Caco-2 (cell line): ENCODE measurements at regions of chrX and their contacts with region 1.

Region 1: GRCh38 chrX:103686199-103687072 is at the start of gene MORF4L2:
- DNase-seq: peak; percentile 91 to 96
- H3K4me3 ChIP-seq: peak within 1 kb of the TSS; percentile 63
- H3K4me3 Mint-ChIP-seq: no peak within 1 kb of the TSS
- H3K27ac Mint-ChIP-seq: no peak within 1 kb of the TSS
- H3K4me1 ChIP-seq: no peaks in the 10 kb centered on the region
- H3K4me1 Mint-ChIP-seq: no peaks in the 10 kb centered on the region
- H3K27me3 ChIP-seq: no peaks in the 10 kb centered on the region
- H3K27me3 Mint-ChIP-seq: no peaks in the 10 kb centered on the region
- CTCF ChIP-seq: no peak
- total RNA-seq, gene MORF4L2: 314 and 322 TPM in 2 replicates

Region 2: DNA sequence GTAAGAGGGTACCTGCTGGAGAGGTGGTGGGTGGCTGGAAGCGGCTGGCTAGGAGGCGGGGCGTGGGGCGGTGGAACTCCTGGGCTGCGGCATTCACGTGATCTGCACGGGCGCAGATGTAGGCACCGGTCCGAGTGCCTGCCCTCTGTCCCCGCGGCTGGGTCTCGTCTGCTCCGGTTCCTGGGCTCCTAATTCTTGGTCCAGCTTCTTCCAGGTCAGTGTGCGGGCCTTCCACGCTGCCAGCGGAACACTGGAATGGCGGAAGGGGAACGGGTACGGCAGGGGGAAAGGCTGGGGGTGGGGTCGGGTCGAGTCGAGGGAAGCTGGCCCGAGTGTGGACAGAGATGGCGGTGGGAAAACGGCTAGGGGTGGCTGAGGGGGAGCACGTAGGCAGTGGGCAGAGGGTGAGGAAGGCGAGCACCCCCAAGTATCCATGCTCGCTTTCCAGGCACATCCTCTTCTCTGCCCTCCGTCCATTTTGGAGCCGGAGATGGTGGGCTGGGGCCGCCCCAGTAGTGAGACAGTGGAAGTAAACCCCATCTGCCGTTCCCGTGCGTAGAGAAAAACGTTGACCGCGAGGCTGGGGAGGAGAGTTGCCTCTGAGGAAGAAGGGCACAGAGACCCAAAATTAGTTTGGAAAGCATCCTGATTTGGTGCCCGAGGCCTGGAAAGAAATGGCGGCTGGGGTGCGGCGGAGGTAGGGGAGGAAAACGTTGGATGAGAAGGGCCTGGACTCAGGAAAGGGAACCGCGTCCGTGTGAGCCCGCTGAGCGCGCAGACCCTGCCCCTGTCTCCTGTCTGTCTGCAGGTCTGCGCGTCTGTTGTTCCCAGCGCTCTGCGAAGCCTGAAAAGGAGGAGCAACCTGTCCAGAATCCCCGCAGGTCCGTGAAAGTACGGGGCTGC is 100.8 kb before region 1 on chrX and contains the start of gene TCEAL4:
- CTCF ChIA-PET with region 1: interaction called, 6 read pairs
- POLR2A ChIA-PET with region 1: interaction called, 10 read pairs
- intact Hi-C with region 1: no loop called
- DNase-seq: peak; percentile 45 to 46
- H3K4me3 ChIP-seq: peak within 1 kb of the TSS; percentile 68
- H3K4me3 Mint-ChIP-seq: peak within 1 kb of the TSS; percentile 87
- H3K27ac Mint-ChIP-seq: peak within 1 kb of the TSS; percentile 72
- H3K4me1 ChIP-seq: no peaks in the 10 kb centered on the region
- H3K4me1 Mint-ChIP-seq: no peaks in the 10 kb centered on the region
- H3K27me3 ChIP-seq: no peaks in the 10 kb centered on the region
- H3K27me3 Mint-ChIP-seq: no peaks in the 10 kb centered on the region
- CTCF ChIP-seq: no peak
- total RNA-seq, gene TCEAL4: 39.0 and 42.3 TPM in 2 replicates

Region 3: DNA sequence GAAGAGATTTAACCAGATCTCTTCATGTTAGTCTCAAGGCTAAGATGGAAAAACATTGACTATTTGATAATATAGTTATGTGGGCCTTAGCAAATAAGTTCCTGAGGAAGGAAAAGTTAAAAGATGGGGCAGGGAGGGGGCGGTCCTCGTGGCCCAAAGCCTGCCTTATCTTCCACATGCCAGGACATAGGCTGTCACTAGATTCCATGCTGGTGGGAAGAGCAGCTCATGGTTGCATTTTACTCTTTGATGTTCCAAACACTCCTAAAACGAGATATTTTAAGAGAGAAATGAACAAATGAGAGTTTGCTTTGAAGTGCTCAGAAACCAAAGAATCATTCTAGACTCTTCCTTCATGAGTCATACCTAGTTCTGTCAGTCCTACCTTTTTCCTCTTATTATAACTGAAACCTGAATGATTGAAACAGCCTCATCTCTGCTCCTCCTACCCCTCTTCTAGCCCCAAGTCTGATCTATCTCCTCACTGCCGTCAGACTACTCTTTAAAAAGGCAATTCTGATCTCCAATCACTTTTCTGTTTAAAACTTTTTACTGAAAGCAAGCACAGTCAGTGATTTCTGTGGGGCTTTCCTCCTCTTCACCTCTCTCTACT is 120.5 kb after region 1 on chrX:
- CTCF ChIA-PET with region 1: no interaction called
- POLR2A ChIA-PET with region 1: no interaction called
- intact Hi-C with region 1: loop called (anchors 2 kb)
- DNase-seq: peak; percentile 67 to 79
- H3K4me3 ChIP-seq: no peak overlapping the region
- H3K4me3 Mint-ChIP-seq: peak overlapping the region; percentile 48
- H3K27ac Mint-ChIP-seq: peak overlapping the region; percentile 87
- H3K4me1 ChIP-seq: peaks cover 30% of the 10 kb centered on the region
- H3K4me1 Mint-ChIP-seq: peaks cover 8% of the 10 kb centered on the region
- H3K27me3 ChIP-seq: no peaks in the 10 kb centered on the region
- H3K27me3 Mint-ChIP-seq: no peaks in the 10 kb centered on the region
- CTCF ChIP-seq: no peak

Region 4: DNA sequence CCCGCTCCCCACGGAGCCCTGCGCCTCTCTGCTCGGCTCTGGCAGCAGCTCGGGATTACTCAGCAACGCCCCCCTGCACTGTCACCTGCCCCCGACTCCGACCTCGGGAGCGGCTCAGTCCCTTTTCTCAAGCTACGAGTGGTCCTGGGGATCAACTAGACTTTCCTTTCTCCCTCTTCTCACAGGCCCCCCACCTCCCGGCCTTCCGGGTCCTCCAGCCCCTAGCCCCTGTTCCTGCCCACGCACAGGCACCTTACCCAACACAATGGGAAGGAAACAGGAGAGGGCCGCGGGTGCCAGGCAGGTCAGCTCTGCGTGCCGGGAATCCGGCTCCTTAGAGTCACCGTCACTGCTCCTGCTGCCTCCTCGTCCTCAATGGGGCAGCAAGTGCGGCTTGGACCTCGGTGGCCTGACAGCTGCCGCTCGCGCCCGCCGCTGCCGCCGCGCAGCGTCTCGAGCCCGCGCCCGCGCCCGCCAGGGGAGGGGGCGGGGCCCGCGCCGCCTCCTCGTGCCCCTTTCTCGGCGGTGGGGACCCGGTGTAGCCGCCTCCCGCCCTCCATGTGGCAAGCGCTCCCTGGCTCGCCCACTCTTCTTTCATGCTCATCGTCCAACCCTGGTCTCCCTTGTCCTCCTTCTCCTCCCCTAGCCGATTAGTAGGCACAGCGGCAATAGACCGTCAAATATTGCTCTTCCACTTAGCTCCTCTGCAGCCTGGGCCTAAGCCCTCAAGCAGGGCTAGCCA is 145.5 kb after region 1 on chrX and contains the start of gene RAB9B:
- CTCF ChIA-PET with region 1: no interaction called
- POLR2A ChIA-PET with region 1: interaction called, 14 read pairs
- intact Hi-C with region 1: loop called (anchors 5 kb)
- DNase-seq: peak; percentile 64 to 65
- H3K4me3 ChIP-seq: peak within 1 kb of the TSS; percentile 69
- H3K4me3 Mint-ChIP-seq: peak within 1 kb of the TSS; percentile 94
- H3K27ac Mint-ChIP-seq: peak within 1 kb of the TSS; percentile 42
- H3K4me1 ChIP-seq: no peaks in the 10 kb centered on the region
- H3K4me1 Mint-ChIP-seq: peaks cover 14% of the 10 kb centered on the region
- H3K27me3 ChIP-seq: no peaks in the 10 kb centered on the region
- H3K27me3 Mint-ChIP-seq: peaks cover 2% of the 10 kb centered on the region
- CTCF ChIP-seq: no peak
- total RNA-seq, gene RAB9B: 1.4 and 1.6 TPM in 2 replicates